CD14-positive monocyte (primary cell): ENCODE measurements at regions of chr1 and their contacts with region 1.

Region 1: DNA sequence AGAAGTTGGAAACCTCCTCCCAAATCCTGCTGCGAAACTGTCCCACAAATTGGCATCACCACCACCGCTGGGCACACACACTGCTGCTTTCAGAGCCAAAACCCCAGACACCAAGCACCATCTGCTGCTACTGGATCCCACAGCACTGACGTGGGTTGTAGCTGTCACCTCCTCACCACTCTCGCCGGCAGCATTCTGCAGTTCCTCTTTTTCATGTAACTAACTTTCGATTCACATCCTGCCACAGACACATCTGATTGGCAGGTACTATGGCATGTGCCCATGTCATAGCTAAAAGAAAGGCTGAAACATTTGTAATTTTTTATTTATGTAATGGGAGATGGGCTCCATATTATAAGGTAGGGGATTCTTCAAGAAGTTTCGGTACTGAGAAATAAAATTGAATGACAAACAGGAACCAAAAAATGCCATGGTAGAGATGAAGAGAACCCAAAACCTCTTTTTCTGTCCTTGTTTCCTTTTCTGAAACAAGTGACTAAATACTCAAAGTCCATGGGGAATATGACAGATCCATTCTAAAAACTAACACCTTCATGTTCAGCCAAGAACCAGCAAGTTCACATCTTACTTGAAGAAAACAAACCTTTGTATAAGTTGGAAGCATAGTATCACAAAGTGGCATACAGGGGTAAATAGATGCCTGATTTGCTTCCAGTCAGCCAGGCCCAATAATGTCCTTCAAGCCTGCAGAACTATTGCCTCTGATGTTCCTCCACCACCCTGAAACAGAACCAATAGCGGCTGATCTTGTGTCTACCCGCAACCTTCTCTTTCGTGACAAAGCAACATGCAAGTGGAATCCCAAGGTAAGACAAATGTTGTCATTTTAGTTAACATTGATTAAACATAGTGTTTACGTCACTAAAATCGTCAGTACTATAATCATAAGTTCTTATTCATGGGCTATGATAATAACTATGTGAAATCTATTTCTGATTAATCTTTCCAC is 26.6 kb upstream of the RGS13 start:
- DNase-seq: peak; percentile 84 to 90 (median 87)
- H3K4me3 ChIP-seq: peak overlapping the region; percentile 8 to 59 (median 43)
- H3K4me3 Mint-ChIP-seq: peak overlapping the region in 1 of 2 donors; percentile 77
- H3K27ac ChIP-seq: peak overlapping the region in 1 of 2 donors; percentile 21
- H3K27ac Mint-ChIP-seq: peak overlapping the region; percentile 57 to 89 (median 86)
- H3K4me1 ChIP-seq: peaks cover 12 to 18% of the 10 kb centered on the region in 2 donors
- H3K4me1 Mint-ChIP-seq: peaks cover 18% of the 10 kb centered on the region
- H3K27me3 ChIP-seq: no peaks in the 10 kb centered on the region
- H3K27me3 Mint-ChIP-seq: peaks cover 0 to 4% (median 0%) of the 10 kb centered on the region in 3 donors
- CTCF ChIP-seq: no peak

Region 2: DNA sequence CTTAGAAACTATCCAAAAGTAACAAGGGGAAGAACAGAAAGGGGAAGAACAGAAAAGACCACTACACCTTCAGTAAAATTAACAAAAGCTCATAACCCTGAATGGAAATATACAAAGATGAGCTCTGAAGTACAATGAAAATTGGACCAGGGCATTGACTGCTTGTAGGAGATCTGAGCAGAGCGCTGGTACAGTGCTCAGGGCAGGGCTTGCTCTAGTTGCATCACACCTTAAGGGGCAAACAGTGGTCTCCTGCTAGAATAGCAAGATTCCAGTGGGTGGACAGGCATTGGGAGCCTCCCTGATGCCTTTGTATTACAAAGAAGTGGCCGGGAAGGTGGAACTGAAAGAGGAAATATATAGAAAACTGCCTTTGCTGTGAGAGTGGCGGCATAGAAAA is 145.7 kb before region 1 on chr1:
- intact Hi-C with region 1: no loop called
- DNase-seq: no peak
- H3K4me3 ChIP-seq: no peak overlapping the region
- H3K4me3 Mint-ChIP-seq: no peak overlapping the region
- H3K27ac ChIP-seq: no peak overlapping the region
- H3K27ac Mint-ChIP-seq: no peak overlapping the region
- H3K4me1 ChIP-seq: no peaks in the 10 kb centered on the region
- H3K4me1 Mint-ChIP-seq: no peaks in the 10 kb centered on the region
- H3K27me3 ChIP-seq: no peaks in the 10 kb centered on the region
- H3K27me3 Mint-ChIP-seq: peaks cover 0 to 4% (median 2%) of the 10 kb centered on the region in 3 donors
- CTCF ChIP-seq: no peak

Region 3: GRCh38 chr1:192477630-192478029 is 131.8 kb before region 1 on chr1:
- intact Hi-C with region 1: loop called (anchors 2 to 5 kb)
- DNase-seq: peak in 2 of 3 donors; percentile 20 to 43
- H3K4me3 ChIP-seq: no peak overlapping the region
- H3K4me3 Mint-ChIP-seq: no peak overlapping the region
- H3K27ac ChIP-seq: no peak overlapping the region
- H3K27ac Mint-ChIP-seq: no peak overlapping the region
- H3K4me1 ChIP-seq: no peaks in the 10 kb centered on the region
- H3K4me1 Mint-ChIP-seq: peaks cover 5% of the 10 kb centered on the region
- H3K27me3 ChIP-seq: no peaks in the 10 kb centered on the region
- H3K27me3 Mint-ChIP-seq: peaks cover 0 to 5% (median 3%) of the 10 kb centered on the region in 3 donors
- CTCF ChIP-seq: peak; percentile 63

Region 4: DNA sequence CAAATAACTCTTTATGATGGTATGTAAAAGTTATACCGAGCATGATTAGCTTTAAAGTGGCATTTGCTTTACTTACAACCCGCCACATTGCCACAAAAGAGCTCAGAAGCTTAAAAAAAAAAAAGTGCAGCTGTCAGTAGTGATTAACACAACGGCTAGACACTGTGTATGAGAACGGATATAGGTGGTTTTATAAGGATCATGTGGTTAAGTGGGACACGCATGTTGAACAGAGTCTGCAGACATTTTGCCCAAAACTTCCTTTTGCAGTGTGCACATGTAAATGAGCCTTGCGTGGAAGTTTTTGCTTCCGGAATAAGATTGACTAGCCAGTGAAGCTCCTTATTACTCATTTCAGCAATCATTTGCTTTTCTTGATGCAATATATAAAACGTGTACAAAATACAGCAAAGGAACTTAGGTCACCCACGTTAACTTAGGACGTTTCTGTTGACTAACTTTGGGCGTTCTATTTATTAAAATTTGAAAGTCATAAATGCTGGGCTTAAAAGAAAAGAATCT is 92.6 kb before region 1 on chr1:
- intact Hi-C with region 1: loop called in 1 of 2 experiments (anchors 10 kb)
- DNase-seq: peak; percentile 82 to 98 (median 94)
- H3K4me3 ChIP-seq: peak overlapping the region in 2 of 3 experiments; percentile 27 to 50
- H3K4me3 Mint-ChIP-seq: peak overlapping the region; percentile 34 to 66
- H3K27ac ChIP-seq: peak overlapping the region in 1 of 2 donors; percentile 65
- H3K27ac Mint-ChIP-seq: peak overlapping the region; percentile 61 to 91 (median 83)
- H3K4me1 ChIP-seq: peaks cover 19 to 26% of the 10 kb centered on the region in 2 donors
- H3K4me1 Mint-ChIP-seq: peaks cover 37% of the 10 kb centered on the region
- H3K27me3 ChIP-seq: no peaks in the 10 kb centered on the region
- H3K27me3 Mint-ChIP-seq: peaks cover 0 to 2% (median 2%) of the 10 kb centered on the region in 3 donors
- CTCF ChIP-seq: no peak

Region 5: GRCh38 chr1:192941722-192942411 is 332.5 kb after region 1 on chr1:
- intact Hi-C with region 1: loop called in 1 of 2 experiments (anchors 10 kb)
- DNase-seq: peak in 2 of 3 donors; percentile 29 to 62
- H3K4me3 ChIP-seq: no peak overlapping the region
- H3K4me3 Mint-ChIP-seq: no peak overlapping the region
- H3K27ac ChIP-seq: peak overlapping the region; percentile 61 to 83
- H3K27ac Mint-ChIP-seq: peak overlapping the region; percentile 92 to 98 (median 97)
- H3K4me1 ChIP-seq: peaks cover 68 to 80% of the 10 kb centered on the region in 2 donors
- H3K4me1 Mint-ChIP-seq: peaks cover 69% of the 10 kb centered on the region
- H3K27me3 ChIP-seq: no peaks in the 10 kb centered on the region
- H3K27me3 Mint-ChIP-seq: peaks cover 0 to 2% (median 0%) of the 10 kb centered on the region in 3 donors
- CTCF ChIP-seq: no peak

Region 6: DNA sequence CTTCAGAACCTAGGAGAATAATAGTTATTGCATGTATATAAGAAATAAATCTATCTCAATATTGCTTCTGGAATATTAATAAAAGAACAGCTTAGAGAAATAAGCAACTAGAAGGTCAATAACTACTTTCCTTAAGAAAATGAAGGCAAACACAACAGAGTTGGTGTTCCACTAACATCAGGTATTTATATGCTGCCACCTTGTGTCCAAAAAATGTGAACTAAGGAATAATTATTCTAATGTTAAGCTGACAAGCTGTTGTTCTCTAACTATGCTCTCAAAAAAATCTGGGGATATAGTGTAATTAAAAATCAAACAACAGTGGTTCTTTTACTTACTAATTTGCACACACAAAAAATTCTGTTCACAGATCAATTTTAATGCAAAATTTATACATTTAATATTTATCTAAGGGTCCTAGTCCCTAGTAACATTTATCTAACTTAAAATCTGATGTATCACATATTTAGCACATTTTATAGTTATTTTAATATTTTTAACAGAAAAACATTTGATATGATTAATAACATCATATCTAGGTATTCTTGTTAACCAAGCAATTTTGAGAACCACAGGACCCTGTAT is 410.1 kb after region 1 on chr1:
- intact Hi-C with region 1: loop called in 1 of 2 experiments (anchors 5 kb)
- DNase-seq: peak; percentile 50 to 85 (median 63)
- H3K4me3 ChIP-seq: no peak overlapping the region
- H3K4me3 Mint-ChIP-seq: no peak overlapping the region
- H3K27ac ChIP-seq: peak overlapping the region in 1 of 2 donors; percentile 48
- H3K27ac Mint-ChIP-seq: peak overlapping the region in 4 of 7 donors; percentile 37 to 64 (median 44)
- H3K4me1 ChIP-seq: peaks cover 3 to 6% of the 10 kb centered on the region in 2 donors
- H3K4me1 Mint-ChIP-seq: peaks cover 4% of the 10 kb centered on the region
- H3K27me3 ChIP-seq: no peaks in the 10 kb centered on the region
- H3K27me3 Mint-ChIP-seq: no peaks in the 10 kb centered on the region
- CTCF ChIP-seq: peak; percentile 71